CD4-positive, alpha-beta T cell (primary cell): ENCODE measurements at regions of chr6 and their contacts with region 1.

Region 1: DNA sequence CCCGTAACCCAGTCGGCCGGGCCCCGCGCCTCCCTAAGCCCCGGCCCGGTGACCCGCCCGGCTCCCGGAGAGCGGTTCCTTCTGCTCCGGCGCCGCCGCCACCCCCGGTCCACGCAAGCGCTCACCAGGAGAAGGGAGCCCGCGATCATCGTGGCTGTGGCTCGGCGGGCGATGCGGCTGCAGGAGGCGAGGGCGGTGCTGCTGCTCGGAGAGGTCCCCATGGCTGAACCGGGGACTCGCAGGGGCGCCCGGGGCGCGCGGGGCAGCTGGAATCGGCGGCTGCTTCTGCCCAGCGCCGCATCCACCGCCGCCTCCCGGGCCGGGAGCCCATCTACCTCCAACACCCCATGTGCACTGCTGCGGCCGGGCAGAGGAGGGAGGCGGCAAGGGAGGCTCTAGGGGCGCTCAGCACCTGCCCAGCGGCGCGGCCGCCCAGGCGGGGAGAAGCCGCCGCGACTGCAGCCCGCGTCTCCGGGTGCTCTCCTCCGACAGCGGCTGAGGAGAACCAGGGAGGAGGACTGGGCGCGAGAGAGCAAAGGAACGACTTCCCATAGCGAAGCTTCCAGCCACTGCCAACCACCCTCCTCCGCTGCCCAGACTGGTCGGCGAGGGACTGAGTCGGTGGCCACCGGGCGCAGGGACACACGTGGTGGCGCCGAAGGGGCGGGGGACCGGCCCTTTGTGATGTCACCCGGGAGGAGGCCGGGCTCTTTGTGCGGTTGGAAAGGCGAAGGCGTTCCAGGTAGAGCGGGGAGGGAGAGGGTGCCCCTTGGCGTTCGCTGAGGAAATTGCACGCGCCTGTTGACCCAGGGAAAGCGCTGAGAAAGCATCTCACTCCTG is at the start of gene TNFRSF21:
- DNase-seq: peak; percentile 39 to 83 (median 62)
- ATAC-seq: peak; percentile 96
- H3K4me3 ChIP-seq: peak within 1 kb of the TSS; percentile 54
- H3K4me3 Mint-ChIP-seq: peak within 1 kb of the TSS; percentile 82
- H3K27ac ChIP-seq: no peak within 1 kb of the TSS
- H3K27ac Mint-ChIP-seq: no peak within 1 kb of the TSS
- H3K4me1 ChIP-seq: peaks cover 14% of the 10 kb centered on the region
- H3K4me1 Mint-ChIP-seq: peaks cover 5% of the 10 kb centered on the region
- H3K27me3 ChIP-seq: peaks cover 15 to 36% of the 10 kb centered on the region in 2 experiments
- H3K27me3 Mint-ChIP-seq: peaks cover 76% of the 10 kb centered on the region
- CTCF ChIP-seq: peak; percentile 78
- total RNA-seq, gene TNFRSF21: 0.92 to 0.96 TPM

Region 2: GRCh38 chr6:46848684-46849360 is 460.7 kb before region 1 on chr6:
- CTCF ChIA-PET with region 1: interaction called, 3 read pairs
- POLR2A ChIA-PET with region 1: no interaction called
- intact Hi-C with region 1: loop called (anchors 2 kb)
- DNase-seq: peak; percentile 18 to 71 (median 36)
- ATAC-seq: no peak
- H3K4me3 ChIP-seq: no peak overlapping the region
- H3K4me3 Mint-ChIP-seq: no peak overlapping the region
- H3K27ac ChIP-seq: no peak overlapping the region
- H3K27ac Mint-ChIP-seq: no peak overlapping the region
- H3K4me1 ChIP-seq: peaks cover 3% of the 10 kb centered on the region
- H3K4me1 Mint-ChIP-seq: peaks cover 6% of the 10 kb centered on the region
- H3K27me3 ChIP-seq: peaks cover 0 to 3% of the 10 kb centered on the region in 2 experiments
- H3K27me3 Mint-ChIP-seq: peaks cover 34% of the 10 kb centered on the region
- CTCF ChIP-seq: peak; percentile 73

Region 3: DNA sequence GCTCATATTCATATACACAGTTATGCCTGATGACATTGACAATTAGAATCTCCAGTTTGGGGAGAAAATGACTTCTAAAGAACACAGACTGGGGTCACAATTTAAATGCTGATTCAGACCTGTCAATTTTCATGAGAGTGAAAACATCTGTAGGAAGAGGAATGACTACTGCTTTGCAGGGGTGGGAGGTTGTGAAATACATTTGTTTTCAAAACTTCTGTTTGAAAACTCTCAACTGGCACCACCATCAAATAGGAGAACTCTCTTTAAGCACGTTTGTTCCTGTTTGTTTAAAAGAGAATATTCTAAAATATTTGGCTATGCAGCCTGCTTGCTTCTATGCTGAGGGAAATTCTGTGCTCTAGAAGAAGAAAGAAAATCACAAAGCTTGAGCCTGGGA is 337.0 kb before region 1 on chr6:
- CTCF ChIA-PET with region 1: no interaction called
- POLR2A ChIA-PET with region 1: no interaction called
- intact Hi-C with region 1: no loop called
- DNase-seq: no peak
- ATAC-seq: no peak
- H3K4me3 ChIP-seq: no peak overlapping the region
- H3K4me3 Mint-ChIP-seq: no peak overlapping the region
- H3K27ac ChIP-seq: no peak overlapping the region
- H3K27ac Mint-ChIP-seq: no peak overlapping the region
- H3K4me1 ChIP-seq: no peaks in the 10 kb centered on the region
- H3K4me1 Mint-ChIP-seq: no peaks in the 10 kb centered on the region
- H3K27me3 ChIP-seq: no peaks in the 10 kb centered on the region
- H3K27me3 Mint-ChIP-seq: peaks cover 9% of the 10 kb centered on the region
- CTCF ChIP-seq: no peak

Region 4: GRCh38 chr6:47097092-47097945 is 212.2 kb before region 1 on chr6:
- CTCF ChIA-PET with region 1: interaction called, 5 read pairs
- POLR2A ChIA-PET with region 1: no interaction called
- intact Hi-C with region 1: loop called (anchors 1 to 2 kb)
- DNase-seq: peak in 7 of 14 experiments; percentile 4 to 61 (median 23)
- ATAC-seq: peak; percentile 55
- H3K4me3 ChIP-seq: no peak overlapping the region
- H3K4me3 Mint-ChIP-seq: no peak overlapping the region
- H3K27ac ChIP-seq: no peak overlapping the region
- H3K27ac Mint-ChIP-seq: no peak overlapping the region
- H3K4me1 ChIP-seq: no peaks in the 10 kb centered on the region
- H3K4me1 Mint-ChIP-seq: no peaks in the 10 kb centered on the region
- H3K27me3 ChIP-seq: no peaks in the 10 kb centered on the region
- H3K27me3 Mint-ChIP-seq: no peaks in the 10 kb centered on the region
- CTCF ChIP-seq: peak; percentile 35